PC-9 (cell line): ENCODE measurements at regions of chr4 and their contacts with region 1.

Region 1: GRCh38 chr4:44210750-44211149 is 237.9 kb downstream of the KCTD8 start:
- DNase-seq: no peak
- H3K4me3 ChIP-seq: no peak overlapping the region
- H3K27ac ChIP-seq: no peak overlapping the region
- H3K4me1 ChIP-seq: no peaks in the 10 kb centered on the region
- H3K27me3 ChIP-seq: no peaks in the 10 kb centered on the region
- CTCF ChIP-seq: no peak

Region 2: GRCh38 chr4:42574870-42575430 is 1635.8 kb before region 1 on chr4:
- CTCF ChIA-PET with region 1: interaction called, 10 read pairs
- POLR2A ChIA-PET with region 1: no interaction called
- intact Hi-C with region 1: no loop called
- DNase-seq: no peak
- H3K4me3 ChIP-seq: no peak overlapping the region
- H3K27ac ChIP-seq: no peak overlapping the region
- H3K4me1 ChIP-seq: no peaks in the 10 kb centered on the region
- H3K27me3 ChIP-seq: no peaks in the 10 kb centered on the region
- CTCF ChIP-seq: no peak